Head of caudate nucleus (tissue), 42 donors: ENCODE measurements at regions of chr7 and their contacts with region 1.

Region 1: DNA sequence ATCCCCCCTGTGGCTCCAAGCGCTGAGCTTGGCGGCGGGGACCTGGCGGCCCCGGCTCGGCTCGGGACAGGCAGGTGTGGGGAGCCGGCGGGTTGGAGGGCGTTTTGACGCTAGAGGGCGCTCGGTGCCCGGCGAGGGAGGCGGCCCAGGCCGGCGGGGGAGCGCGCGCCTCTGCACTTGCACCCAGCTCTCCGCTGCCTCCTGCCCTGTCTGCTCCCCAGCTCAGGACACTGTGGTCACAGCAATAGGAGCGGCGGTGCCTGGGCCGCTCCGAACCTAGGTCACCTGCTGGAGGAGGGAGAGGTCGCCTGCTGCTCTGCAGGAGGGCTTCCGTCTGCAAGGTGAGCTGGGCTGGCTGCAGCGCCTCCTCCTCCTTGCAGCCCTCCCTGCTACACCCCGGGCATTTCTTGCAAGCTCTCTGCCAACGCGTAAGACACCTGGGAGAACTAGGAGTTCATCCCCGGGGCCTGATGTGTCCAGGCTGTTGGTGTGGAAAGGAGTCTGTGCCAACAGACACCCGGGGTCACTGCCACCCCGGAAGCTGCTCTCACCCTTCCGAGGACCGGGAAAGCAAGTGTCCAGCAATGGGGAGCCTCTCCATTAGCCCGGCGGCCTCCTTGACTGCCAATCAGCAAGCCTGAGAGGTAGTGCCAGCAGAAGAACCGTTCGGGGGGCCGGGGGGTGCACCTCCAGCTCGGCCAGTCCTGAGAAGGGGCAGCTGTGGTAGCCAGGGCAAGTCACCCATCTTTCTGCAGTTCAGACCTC is 620.4 kb downstream of the GALNT17 start:
- DNase-seq: peak; percentile 28 to 90 (median 79)

Region 2: GRCh38 chr7:71019706-71020105 is 732.6 kb before region 1 on chr7:
- intact Hi-C with region 1: no loop called
- DNase-seq: peak in 16 of 42 donors; percentile 2 to 53 (median 14)

Region 3: GRCh38 chr7:72493850-72494661 is 741.7 kb after region 1 on chr7:
- intact Hi-C with region 1: loop called (anchors 5 kb)
- DNase-seq: peak; percentile 55 to 94 (median 84)